Vagina (tissue), 2 donors: ENCODE measurements at regions of chr18 and their contacts with region 1.

Region 1: GRCh38 chr18:40035966-40036365 is 1919.1 kb upstream of the PIK3C3 start:
- DNase-seq: no peak
- H3K4me3 ChIP-seq: no peak overlapping the region
- H3K27ac ChIP-seq: no peak overlapping the region
- H3K4me1 ChIP-seq: no peaks in the 10 kb centered on the region
- H3K27me3 ChIP-seq: no peaks in the 10 kb centered on the region
- CTCF ChIP-seq: no peak
- POLR2A ChIP-seq: no peak

Region 2: DNA sequence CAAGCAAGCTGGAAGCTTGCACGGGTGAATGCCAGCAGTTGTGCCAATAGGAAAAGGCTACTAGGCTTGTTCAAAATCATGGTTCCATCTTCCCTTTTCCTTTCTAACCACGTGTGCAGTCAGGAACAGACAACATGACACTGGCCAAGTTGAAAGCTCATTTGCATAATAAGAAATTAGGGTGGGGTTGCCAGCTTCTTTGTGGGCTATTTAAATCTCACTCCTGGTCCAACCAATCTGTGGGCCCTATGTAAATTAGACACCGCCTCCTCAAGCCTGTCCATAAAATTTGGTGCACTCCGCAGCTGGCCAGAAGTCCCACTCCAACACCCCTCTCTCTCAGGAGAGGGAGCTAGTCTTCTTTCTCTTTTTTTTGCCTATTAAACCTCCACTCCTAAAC is 29.3 kb before region 1 on chr18:
- intact Hi-C with region 1: no loop called
- DNase-seq: no peak
- H3K4me3 ChIP-seq: no peak overlapping the region
- H3K27ac ChIP-seq: no peak overlapping the region
- H3K4me1 ChIP-seq: no peaks in the 10 kb centered on the region
- H3K27me3 ChIP-seq: no peaks in the 10 kb centered on the region
- CTCF ChIP-seq: no peak
- POLR2A ChIP-seq: no peak

Region 3: DNA sequence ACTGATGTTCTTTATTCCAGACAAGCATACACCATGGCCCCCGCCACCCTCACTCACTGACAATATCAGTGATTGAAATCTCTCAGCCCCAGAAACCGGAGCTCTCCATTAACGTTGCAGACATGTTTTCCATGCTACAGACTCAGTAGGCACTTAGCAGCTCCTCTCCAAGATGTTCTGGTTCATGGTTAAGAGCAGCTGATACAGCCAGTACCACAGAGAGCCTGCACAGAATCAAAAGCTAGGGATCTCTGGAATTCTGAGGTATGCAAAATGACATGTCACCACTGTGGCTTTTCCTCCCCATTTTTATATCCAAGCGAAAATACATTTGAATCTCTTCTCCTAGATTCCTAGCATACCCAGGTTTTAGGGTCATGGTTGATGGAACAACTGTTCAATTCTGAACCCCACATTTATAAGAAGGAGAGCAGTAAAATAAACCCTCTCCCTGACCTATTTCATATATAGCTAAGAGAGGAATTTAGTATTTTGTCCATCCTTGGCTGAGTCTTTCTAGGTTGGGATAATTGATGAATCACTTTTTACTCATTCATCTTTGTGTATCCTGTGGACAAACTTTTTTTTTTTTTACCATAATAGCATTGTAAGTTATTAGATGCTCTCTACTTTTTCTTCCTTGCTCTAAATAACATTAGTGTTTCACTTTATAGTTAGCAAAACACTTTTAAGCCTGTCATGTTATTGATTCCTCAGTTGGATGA is 1430.6 kb after region 1 on chr18:
- intact Hi-C with region 1: loop called (anchors 5 kb)
- DNase-seq: no peak
- H3K4me3 ChIP-seq: no peak overlapping the region
- H3K27ac ChIP-seq: no peak overlapping the region
- H3K4me1 ChIP-seq: no peaks in the 10 kb centered on the region
- H3K27me3 ChIP-seq: no peaks in the 10 kb centered on the region
- CTCF ChIP-seq: no peak
- POLR2A ChIP-seq: no peak